Naive thymus-derived CD4-positive, alpha-beta T cell (primary cell): ENCODE measurements at regions of chr12 and their contacts with region 1.

Region 1: DNA sequence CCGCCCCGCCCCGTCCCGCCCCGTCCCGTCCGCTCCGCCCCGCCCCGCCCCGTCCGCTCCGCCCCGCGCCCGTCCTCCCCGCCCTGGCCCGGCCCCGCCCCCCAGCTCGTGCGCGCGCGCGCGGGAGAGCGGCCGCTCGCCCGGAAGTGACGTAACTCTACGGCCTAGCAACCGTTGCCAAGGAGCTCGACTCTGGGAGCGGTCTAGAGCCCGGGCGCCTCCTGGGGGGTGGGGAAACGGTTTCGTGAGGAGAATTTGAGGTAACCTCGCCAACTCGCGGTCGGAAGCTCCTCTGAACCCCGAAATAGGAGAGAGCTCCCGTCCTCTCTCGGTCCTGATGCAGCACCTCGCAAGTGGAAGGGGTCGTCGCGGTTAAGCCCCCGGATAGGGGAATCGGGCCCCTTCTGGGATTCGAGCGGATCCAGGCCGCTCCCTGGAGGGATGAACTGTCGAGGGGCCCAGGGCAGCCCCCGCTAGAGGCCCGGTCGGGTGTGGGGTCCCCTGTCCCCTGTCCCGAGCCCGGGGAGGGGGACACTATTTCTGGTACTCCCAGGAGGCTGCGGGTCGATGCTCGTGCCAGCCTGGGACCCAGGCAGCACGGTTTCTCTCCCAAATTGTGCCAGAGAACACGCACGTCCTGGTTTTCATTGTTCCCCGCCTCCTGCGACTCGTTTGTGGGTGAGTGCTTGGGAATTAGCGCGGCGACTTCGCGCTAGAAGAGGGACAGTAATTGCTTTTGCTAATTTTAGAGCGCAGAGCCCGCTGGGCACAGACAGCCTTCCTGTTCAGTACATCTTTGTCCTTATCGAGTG is at the start of gene IFT81:
- DNase-seq: peak; percentile 84 to 98 (median 93)
- ATAC-seq: peak; percentile 98
- H3K4me3 ChIP-seq: peak within 1 kb of the TSS; percentile 99
- H3K4me3 Mint-ChIP-seq: peak within 1 kb of the TSS; percentile 83 to 94 (median 92)
- H3K27ac ChIP-seq: peak within 1 kb of the TSS; percentile 84
- H3K27ac Mint-ChIP-seq: peak within 1 kb of the TSS; percentile 56 to 94 (median 90)
- H3K4me1 ChIP-seq: peaks cover 4 to 5% of the 10 kb centered on the region in 2 donors
- H3K4me1 Mint-ChIP-seq: peaks cover 0 to 9% (median 8%) of the 10 kb centered on the region in 7 donors
- H3K27me3 ChIP-seq: no peaks in the 10 kb centered on the region
- H3K27me3 Mint-ChIP-seq: peaks cover 0 to 52% (median 0%) of the 10 kb centered on the region in 5 donors
- total RNA-seq, gene IFT81: 0.66 to 1.3 (median 1.3) TPM

Region 2: DNA sequence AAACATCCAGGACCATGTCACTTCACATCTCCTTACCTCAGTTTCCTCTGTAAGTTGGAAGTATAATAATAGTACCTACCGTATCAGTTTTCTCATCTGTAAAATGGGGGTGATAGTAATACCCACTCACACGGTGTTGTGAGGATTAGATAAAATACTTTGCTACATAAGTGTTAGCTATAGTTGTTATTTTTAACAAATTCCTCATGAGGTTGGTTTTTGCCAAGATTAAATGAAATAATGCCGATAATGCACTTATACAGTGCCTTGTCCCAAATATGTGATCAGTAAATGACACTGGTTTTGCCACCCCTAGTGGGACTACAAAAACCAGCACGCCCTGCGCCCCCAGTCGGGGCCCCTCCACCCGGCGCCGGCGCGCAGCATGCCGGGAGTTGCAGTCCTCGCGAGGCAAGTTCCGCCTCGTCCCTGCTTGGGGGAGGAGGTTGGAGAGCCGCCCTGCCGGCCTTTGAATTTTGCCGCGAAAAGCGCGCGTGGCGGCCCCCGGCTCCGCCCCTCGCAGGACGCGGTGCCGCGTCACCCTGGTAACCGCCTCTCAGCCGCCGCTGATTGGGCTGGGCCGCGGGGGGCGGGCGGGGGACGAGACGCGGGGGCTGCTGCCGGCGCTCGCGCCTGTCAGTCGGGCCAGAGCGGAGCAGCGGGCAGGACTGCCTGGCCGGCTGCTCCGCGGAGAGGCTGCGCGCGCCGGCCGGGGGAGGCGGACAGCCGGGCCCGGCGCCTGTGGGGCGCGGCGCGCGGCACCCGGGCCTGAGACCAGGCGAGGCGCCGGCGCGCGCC is 411.0 kb before region 1 on chr12 and contains the start of gene FAM222A:
- CTCF ChIA-PET with region 1: no interaction called
- POLR2A ChIA-PET with region 1: no interaction called
- intact Hi-C with region 1: loop called in 1 of 2 experiments (anchors 1 kb)
- DNase-seq: peak; percentile 94 to 99 (median 98)
- ATAC-seq: peak; percentile 94
- H3K4me3 ChIP-seq: peak within 1 kb of the TSS; percentile 41
- H3K4me3 Mint-ChIP-seq: peak within 1 kb of the TSS; percentile 57 to 81 (median 72)
- H3K27ac ChIP-seq: peak within 1 kb of the TSS; percentile 55
- H3K27ac Mint-ChIP-seq: peak within 1 kb of the TSS in 1 of 9 donors; percentile 48
- H3K4me1 ChIP-seq: peaks cover 3 to 11% of the 10 kb centered on the region in 2 donors
- H3K4me1 Mint-ChIP-seq: peaks cover 0 to 4% (median 0%) of the 10 kb centered on the region in 7 donors
- H3K27me3 ChIP-seq: peaks cover 0 to 6% of the 10 kb centered on the region in 2 donors
- H3K27me3 Mint-ChIP-seq: peaks cover 29 to 65% (median 30%) of the 10 kb centered on the region in 5 donors
- total RNA-seq, gene FAM222A: 0.24 to 1.6 (median 0.80) TPM

Region 3: GRCh38 chr12:110079477-110080400 is 44.7 kb before region 1 on chr12:
- CTCF ChIA-PET with region 1: no interaction called
- POLR2A ChIA-PET with region 1: interaction called, 5 read pairs
- intact Hi-C with region 1: loop called (anchors 1 to 2 kb)
- DNase-seq: peak; percentile 44 to 83 (median 75)
- ATAC-seq: peak; percentile 96
- H3K4me3 ChIP-seq: peak overlapping the region; percentile 42
- H3K4me3 Mint-ChIP-seq: peak overlapping the region; percentile 76 to 94 (median 86)
- H3K27ac ChIP-seq: peak overlapping the region; percentile 71
- H3K27ac Mint-ChIP-seq: peak overlapping the region; percentile 92 to 99 (median 98)
- H3K4me1 ChIP-seq: peaks cover 9 to 21% of the 10 kb centered on the region in 2 donors
- H3K4me1 Mint-ChIP-seq: peaks cover 13 to 47% (median 26%) of the 10 kb centered on the region in 7 donors
- H3K27me3 ChIP-seq: no peaks in the 10 kb centered on the region
- H3K27me3 Mint-ChIP-seq: peaks cover 0 to 5% (median 0%) of the 10 kb centered on the region in 5 donors

Region 4: DNA sequence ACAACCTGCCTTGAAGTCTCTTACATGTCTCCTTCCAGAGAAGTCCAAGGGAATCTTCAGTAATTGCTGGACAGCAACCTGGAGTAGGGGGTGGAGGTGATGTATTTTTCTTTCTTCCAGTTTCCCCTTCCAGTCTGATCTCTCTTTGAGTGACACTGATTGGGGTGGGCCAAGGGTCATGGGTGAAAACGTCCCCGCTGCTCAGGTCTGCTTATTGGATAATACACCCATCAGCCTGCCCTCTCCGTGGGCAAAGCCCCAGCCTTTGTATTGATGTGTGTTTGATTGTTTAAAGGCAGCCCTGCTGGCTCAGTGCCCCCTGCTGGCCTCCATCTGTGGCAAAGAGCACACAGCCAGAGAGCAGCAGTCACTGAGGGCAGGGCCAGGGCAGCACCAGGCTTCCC is 121.0 kb after region 1 on chr12:
- CTCF ChIA-PET with region 1: no interaction called
- POLR2A ChIA-PET with region 1: no interaction called
- intact Hi-C with region 1: loop called in 1 of 2 experiments (anchors 1 kb)
- DNase-seq: peak in 7 of 9 donors; percentile 7 to 46 (median 30)
- ATAC-seq: peak; percentile 85
- H3K4me3 ChIP-seq: no peak overlapping the region
- H3K4me3 Mint-ChIP-seq: no peak overlapping the region
- H3K27ac ChIP-seq: no peak overlapping the region
- H3K27ac Mint-ChIP-seq: no peak overlapping the region
- H3K4me1 ChIP-seq: no peaks in the 10 kb centered on the region
- H3K4me1 Mint-ChIP-seq: peaks cover 0 to 5% (median 0%) of the 10 kb centered on the region in 7 donors
- H3K27me3 ChIP-seq: no peaks in the 10 kb centered on the region
- H3K27me3 Mint-ChIP-seq: peaks cover 0 to 5% (median 5%) of the 10 kb centered on the region in 5 donors

Region 5: GRCh38 chr12:110583137-110584059 is 459.0 kb after region 1 on chr12 and contains the start of gene PPTC7:
- CTCF ChIA-PET with region 1: no interaction called
- POLR2A ChIA-PET with region 1: no interaction called
- intact Hi-C with region 1: loop called in 1 of 2 experiments (anchors 10 kb)
- DNase-seq: peak; percentile 84 to 97 (median 93)
- ATAC-seq: peak; percentile 98
- H3K4me3 ChIP-seq: peak within 1 kb of the TSS; percentile 72
- H3K4me3 Mint-ChIP-seq: peak within 1 kb of the TSS; percentile 91 to 97 (median 95)
- H3K27ac ChIP-seq: peak within 1 kb of the TSS; percentile 97
- H3K27ac Mint-ChIP-seq: peak within 1 kb of the TSS; percentile 93 to 97 (median 95)
- H3K4me1 ChIP-seq: peaks cover 26 to 55% of the 10 kb centered on the region in 2 donors
- H3K4me1 Mint-ChIP-seq: peaks cover 53 to 74% (median 67%) of the 10 kb centered on the region in 7 donors
- H3K27me3 ChIP-seq: no peaks in the 10 kb centered on the region
- H3K27me3 Mint-ChIP-seq: no peaks in the 10 kb centered on the region
- total RNA-seq, gene PPTC7: 36.7 to 43.8 (median 38.8) TPM